ENCODE measurements at regions of chr4 and their contacts with region 1.

Region 1: DNA sequence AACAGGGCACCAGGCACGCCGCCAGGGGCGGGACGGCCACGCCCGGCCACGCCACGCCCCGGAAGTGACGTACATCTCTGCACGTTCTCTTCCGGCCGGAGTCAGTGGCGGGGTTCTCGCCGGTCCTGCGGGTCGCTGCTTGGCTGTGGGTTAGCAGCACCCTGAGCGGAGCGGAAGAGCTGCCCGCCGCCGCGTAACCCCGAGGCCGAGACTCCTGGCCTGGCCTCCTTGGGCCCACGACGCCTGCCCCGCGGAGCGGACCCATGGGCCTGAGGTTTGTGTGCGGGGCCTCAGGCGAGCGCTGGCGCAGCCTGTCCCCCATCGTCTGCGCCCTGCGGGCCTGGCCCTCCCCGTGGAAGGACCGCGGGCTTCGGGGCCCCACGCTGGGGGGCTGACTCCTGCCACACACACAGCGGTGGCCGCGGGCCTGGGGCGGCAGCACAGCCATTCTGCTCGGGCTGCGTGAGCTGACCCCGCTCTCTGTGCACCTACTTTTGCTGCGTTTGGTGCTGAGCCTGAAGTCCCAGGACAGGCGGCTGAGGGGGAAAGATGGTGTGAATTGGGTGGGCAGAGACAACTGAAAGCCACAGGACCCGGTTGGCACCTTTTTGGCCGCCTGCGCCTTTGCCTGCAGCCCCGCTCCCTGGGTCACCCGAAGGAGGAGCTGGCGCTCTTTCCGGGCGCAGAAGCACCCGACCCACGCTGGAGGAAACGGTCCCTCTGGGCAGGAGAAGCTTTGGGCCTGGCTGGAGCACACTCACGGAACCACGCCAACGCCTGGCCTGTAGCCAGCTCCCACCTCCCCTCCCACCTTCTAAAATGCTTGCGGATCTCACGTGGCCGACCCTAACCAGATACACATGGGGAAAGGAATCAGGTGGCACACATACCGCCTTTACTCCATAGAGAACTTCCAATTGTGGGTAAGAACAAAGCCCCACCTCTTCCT is 28.1 kb downstream of the NOP14 start:
- DNase-seq: peak; percentile 98
- ATAC-seq: peak; percentile 34
- H3K4me3 Mint-ChIP-seq: peak overlapping the region; percentile 90
- H3K27ac Mint-ChIP-seq: peak overlapping the region; percentile 95
- H3K4me1 Mint-ChIP-seq: peaks cover 53% of the 10 kb centered on the region
- H3K27me3 Mint-ChIP-seq: no peaks in the 10 kb centered on the region

Region 2: GRCh38 chr4:2262143-2262943 is 672.7 kb before region 1 on chr4:
- CTCF ChIA-PET with region 1: no interaction called
- POLR2A ChIA-PET with region 1: no interaction called
- intact Hi-C with region 1: loop called in 1 of 2 experiments (anchors 2 kb)
- DNase-seq: peak; percentile 99
- ATAC-seq: peak; percentile 96
- H3K4me3 Mint-ChIP-seq: peak overlapping the region; percentile 61
- H3K27ac Mint-ChIP-seq: no peak overlapping the region
- H3K4me1 Mint-ChIP-seq: peaks cover 2% of the 10 kb centered on the region
- H3K27me3 Mint-ChIP-seq: no peaks in the 10 kb centered on the region

Region 3: GRCh38 chr4:2745981-2746806 is 188.9 kb before region 1 on chr4:
- CTCF ChIA-PET with region 1: interaction called, 3 read pairs
- POLR2A ChIA-PET with region 1: interaction called, 7 read pairs
- intact Hi-C with region 1: loop called (anchors 1 to 2 kb)
- DNase-seq: peak; percentile 98
- ATAC-seq: peak; percentile 97
- H3K4me3 Mint-ChIP-seq: peak overlapping the region; percentile 62
- H3K27ac Mint-ChIP-seq: peak overlapping the region; percentile 97
- H3K4me1 Mint-ChIP-seq: peaks cover 58% of the 10 kb centered on the region
- H3K27me3 Mint-ChIP-seq: no peaks in the 10 kb centered on the region

Region 4: GRCh38 chr4:2843263-2843940 is 91.7 kb before region 1 on chr4 and contains the start of gene ADD1:
- CTCF ChIA-PET with region 1: interaction called, 3 read pairs
- POLR2A ChIA-PET with region 1: interaction called, 5 read pairs
- intact Hi-C with region 1: loop called (anchors 1 to 5 kb)
- DNase-seq: peak; percentile 94
- ATAC-seq: peak; percentile 88
- H3K4me3 Mint-ChIP-seq: peak within 1 kb of the TSS; percentile 88
- H3K27ac Mint-ChIP-seq: peak within 1 kb of the TSS; percentile 89
- H3K4me1 Mint-ChIP-seq: peaks cover 56% of the 10 kb centered on the region
- H3K27me3 Mint-ChIP-seq: no peaks in the 10 kb centered on the region
- total RNA-seq, gene ADD1: 196 to 206 TPM

Region 5: GRCh38 chr4:3074078-3074795 is 139.2 kb after region 1 on chr4 and contains the starts of genes HTT and HTT-AS:
- CTCF ChIA-PET with region 1: no interaction called
- POLR2A ChIA-PET with region 1: no interaction called
- intact Hi-C with region 1: loop called in 1 of 2 experiments (anchors 1 kb)
- DNase-seq: peak; percentile 100
- ATAC-seq: peak; percentile 89
- H3K4me3 Mint-ChIP-seq: peak within 1 kb of the TSS; percentile 95
- H3K27ac Mint-ChIP-seq: peak within 1 kb of the TSS; percentile 90
- H3K4me1 Mint-ChIP-seq: peaks cover 24% of the 10 kb centered on the region
- H3K27me3 Mint-ChIP-seq: no peaks in the 10 kb centered on the region
- total RNA-seq, gene HTT: 80.1 to 127 TPM
- total RNA-seq, gene HTT-AS: not detected

Measured in activated CD4-positive, alpha-beta T cell treated with anti-CD3 and anti-CD28 coated beads for 36 hours (primary cell).